Gastrocnemius medialis (tissue), 4 donors: ENCODE measurements at regions of chr5 and their contacts with region 1.

Region 1: GRCh38 chr5:78574731-78575161 is 73.8 kb downstream of the LHFPL2 start:
- DNase-seq: no peak
- ATAC-seq: no peak
- H3K4me3 ChIP-seq: no peak overlapping the region
- H3K27ac ChIP-seq: peak overlapping the region in 1 of 4 donors; percentile 37
- H3K4me1 ChIP-seq: peaks cover 41 to 52% of the 10 kb centered on the region in 2 donors
- H3K27me3 ChIP-seq: no peaks in the 10 kb centered on the region
- CTCF ChIP-seq: no peak
- POLR2A ChIP-seq: no peak

Region 2: GRCh38 chr5:78490709-78491485 is 83.8 kb before region 1 on chr5:
- in situ Hi-C with region 1: no loop called
- intact Hi-C with region 1: no loop called
- DNase-seq: no peak
- ATAC-seq: no peak
- H3K4me3 ChIP-seq: no peak overlapping the region
- H3K27ac ChIP-seq: no peak overlapping the region
- H3K4me1 ChIP-seq: no peaks in the 10 kb centered on the region
- H3K27me3 ChIP-seq: no peaks in the 10 kb centered on the region
- CTCF ChIP-seq: no peak
- POLR2A ChIP-seq: no peak

Region 3: DNA sequence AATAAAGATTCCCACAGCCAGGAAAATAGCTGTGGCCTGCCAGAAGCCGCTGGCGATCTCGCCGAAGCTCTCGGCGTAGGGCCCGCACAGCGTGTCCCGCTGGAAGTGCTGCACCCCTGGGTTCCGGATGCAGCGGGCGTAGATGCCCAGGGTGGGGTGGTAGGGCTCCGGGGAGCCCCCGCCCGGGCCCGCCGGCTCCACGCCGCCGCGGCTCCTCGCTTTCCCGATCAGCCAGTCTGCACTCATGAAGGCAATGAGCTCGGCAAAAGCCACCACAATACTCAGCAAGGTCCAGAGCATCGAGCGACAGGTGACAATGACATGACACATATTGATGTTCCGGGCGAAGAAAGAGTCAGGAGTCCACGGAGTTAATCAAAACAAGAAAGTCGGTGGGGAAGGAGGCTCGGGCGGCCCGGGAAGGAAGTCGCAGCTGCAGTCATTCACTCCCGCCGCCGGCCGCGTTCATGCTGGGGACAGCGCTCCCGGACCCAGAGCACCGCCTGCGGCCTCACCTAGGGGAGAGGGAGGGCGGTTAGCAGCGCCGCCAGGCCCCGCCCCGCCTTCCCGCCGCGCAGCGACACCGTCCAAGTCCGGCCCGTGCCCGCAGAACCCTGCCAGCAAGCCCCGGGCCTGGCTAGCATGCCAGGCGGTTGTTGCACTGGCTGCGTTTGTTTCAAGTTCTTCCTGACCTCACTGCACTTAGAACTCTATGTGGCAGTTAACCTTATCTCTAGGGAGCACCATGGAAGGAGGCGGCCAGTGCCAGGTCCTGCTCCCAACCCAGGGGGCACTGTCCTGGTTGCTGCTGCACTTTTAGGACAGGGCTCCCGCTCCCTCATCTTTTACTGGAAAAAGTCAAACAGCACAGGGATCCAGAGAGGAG is 64.6 kb before region 1 on chr5:
- in situ Hi-C with region 1: no loop called
- intact Hi-C with region 1: loop called (anchors 5 kb)
- DNase-seq: peak; percentile 43 to 68
- ATAC-seq: peak; percentile 70 to 73
- H3K4me3 ChIP-seq: peak overlapping the region; percentile 53 to 65 (median 54)
- H3K27ac ChIP-seq: peak overlapping the region; percentile 42 to 72 (median 56)
- H3K4me1 ChIP-seq: peaks cover 26 to 34% of the 10 kb centered on the region in 2 donors
- H3K27me3 ChIP-seq: no peaks in the 10 kb centered on the region
- CTCF ChIP-seq: peak in 1 of 5 experiments; percentile 19
- POLR2A ChIP-seq: peak; percentile 16

Region 4: DNA sequence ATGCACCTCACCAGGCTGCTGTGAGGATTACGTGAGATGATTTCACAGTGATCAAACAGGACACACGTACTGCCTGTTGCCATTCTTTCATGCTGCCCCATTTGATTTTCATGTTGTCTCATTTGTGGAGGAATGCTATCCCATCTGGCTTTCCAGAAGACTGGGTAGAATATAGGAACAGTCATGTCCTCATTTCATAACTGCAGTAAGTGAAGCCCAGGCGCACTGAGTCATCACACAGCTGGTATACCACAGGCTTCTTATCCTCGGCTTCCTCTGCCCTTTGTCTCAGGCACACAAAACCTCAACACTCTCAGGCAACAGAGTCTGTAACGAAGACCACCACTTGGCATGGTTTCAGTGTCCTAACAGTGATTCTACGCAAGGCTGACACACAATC is 11.5 kb after region 1 on chr5:
- in situ Hi-C with region 1: no loop called
- intact Hi-C with region 1: loop called (anchors 2 kb)
- DNase-seq: peak; percentile 31 to 40
- ATAC-seq: peak; percentile 68 to 76
- H3K4me3 ChIP-seq: no peak overlapping the region
- H3K27ac ChIP-seq: peak overlapping the region in 1 of 4 donors; percentile 35
- H3K4me1 ChIP-seq: peaks cover 21 to 30% of the 10 kb centered on the region in 2 donors
- H3K27me3 ChIP-seq: no peaks in the 10 kb centered on the region
- CTCF ChIP-seq: no peak
- POLR2A ChIP-seq: no peak